Activated T-helper 2 cell treated with anti-CD3 and anti-CD28 coated beads, Interferon-gamma antibody, Interleukin-2, Interleukin-4, amounts not matched to agents 10 μg/mL and 5 μg/mL and 100 μg/mL, durations not matched to agents 14 hours and 24 hours and 36 hours (primary cell): ENCODE measurements at regions of chr3 and their contacts with region 1.

Region 1: GRCh38 chr3:194583604-194584318 is 49.5 kb downstream of the TMEM44 start:
- DNase-seq: peak; percentile 95
- H3K4me3 Mint-ChIP-seq: peak overlapping the region; percentile 99
- H3K27ac Mint-ChIP-seq: peak overlapping the region; percentile 97
- H3K4me1 Mint-ChIP-seq: peaks cover 27% of the 10 kb centered on the region
- H3K27me3 Mint-ChIP-seq: no peaks in the 10 kb centered on the region

Region 2: GRCh38 chr3:194481103-194481502 is 102.7 kb before region 1 on chr3:
- intact Hi-C with region 1: loop called (anchors 2 kb)
- DNase-seq: no peak
- H3K4me3 Mint-ChIP-seq: no peak overlapping the region
- H3K27ac Mint-ChIP-seq: peak overlapping the region; percentile 72
- H3K4me1 Mint-ChIP-seq: peaks cover 41% of the 10 kb centered on the region
- H3K27me3 Mint-ChIP-seq: no peaks in the 10 kb centered on the region

Region 3: DNA sequence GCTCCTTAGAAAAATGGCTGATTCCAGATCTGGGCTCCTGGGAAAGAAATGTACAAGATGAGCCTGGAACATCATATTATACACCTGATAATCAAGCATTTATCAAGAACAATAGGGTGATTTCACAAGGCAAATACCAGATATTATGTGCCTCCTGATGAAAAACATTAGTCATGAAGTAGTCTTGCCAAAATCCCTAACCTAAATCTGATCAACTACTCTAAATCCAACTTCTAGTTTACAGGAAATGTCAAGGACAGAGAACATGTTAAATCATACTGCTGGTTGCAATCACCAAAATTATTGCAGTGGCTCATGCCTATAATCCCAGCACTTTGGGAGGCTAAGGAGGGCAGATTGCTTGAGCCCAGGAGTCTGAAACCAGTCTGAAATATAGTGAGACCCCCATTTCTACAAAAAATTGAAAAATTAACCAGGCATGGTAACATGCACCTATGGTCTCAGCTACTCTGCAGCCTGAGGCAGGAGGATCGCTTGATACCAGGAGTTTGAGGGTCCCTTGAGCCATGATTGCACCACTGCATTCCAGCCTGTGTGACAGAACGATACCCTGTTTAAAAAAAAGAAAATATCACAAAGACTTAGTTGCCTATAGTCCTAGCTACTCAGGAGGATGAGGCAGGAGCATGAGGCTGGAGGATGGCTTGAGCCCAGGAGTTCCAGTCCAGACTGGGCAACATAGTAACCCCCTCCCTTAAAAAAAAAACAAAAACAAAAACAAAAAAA is 62.1 kb before region 1 on chr3:
- intact Hi-C with region 1: loop called (anchors 2 kb)
- DNase-seq: no peak
- H3K4me3 Mint-ChIP-seq: no peak overlapping the region
- H3K27ac Mint-ChIP-seq: no peak overlapping the region
- H3K4me1 Mint-ChIP-seq: peaks cover 27% of the 10 kb centered on the region
- H3K27me3 Mint-ChIP-seq: no peaks in the 10 kb centered on the region

Region 4: DNA sequence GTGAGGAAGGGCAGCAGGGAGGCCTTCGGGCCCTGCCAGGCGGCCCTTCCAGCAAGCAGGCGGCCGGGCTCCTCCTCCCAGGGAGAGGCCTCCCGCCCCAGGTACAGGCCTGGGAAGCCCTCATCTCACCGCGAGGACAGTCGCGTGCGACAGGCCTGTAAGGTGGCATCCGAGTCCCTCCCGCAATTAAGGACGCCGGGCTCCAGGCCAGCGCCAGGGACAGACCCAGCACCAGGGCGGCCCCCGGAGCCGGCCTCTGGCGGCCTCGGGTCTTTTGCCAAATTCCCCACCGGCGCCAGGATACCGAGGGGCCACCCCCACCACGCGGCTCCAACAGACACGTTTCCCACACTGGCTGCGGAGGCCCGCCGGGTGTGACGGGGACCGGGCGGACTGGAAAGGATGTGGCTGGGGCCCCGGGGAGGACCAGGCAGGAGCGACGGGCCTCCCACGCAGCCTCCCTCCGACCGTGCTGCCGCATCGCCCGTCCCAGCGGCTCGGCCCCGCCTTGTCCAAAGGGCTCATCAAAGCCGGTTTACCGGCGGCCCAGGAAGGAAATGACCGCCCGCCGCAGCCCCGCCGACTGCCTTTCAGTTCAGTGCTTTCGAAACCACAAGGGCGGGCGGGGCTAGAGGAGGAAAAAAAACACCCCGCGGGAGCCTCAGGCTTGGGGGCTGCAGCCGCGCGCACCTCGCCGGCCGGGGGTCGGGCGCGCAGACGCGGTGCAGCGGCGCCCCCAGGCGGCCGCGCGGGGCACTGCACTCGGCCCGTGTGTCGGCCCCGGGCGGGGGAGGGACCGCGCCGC is 675.9 kb after region 1 on chr3:
- intact Hi-C with region 1: loop called (anchors 10 kb)
- DNase-seq: peak; percentile 80
- H3K4me3 Mint-ChIP-seq: peak overlapping the region; percentile 55
- H3K27ac Mint-ChIP-seq: peak overlapping the region; percentile 38
- H3K4me1 Mint-ChIP-seq: peaks cover 29% of the 10 kb centered on the region
- H3K27me3 Mint-ChIP-seq: no peaks in the 10 kb centered on the region